ENCODE measurements at regions of chr21 and their contacts with region 1.

Region 1: DNA sequence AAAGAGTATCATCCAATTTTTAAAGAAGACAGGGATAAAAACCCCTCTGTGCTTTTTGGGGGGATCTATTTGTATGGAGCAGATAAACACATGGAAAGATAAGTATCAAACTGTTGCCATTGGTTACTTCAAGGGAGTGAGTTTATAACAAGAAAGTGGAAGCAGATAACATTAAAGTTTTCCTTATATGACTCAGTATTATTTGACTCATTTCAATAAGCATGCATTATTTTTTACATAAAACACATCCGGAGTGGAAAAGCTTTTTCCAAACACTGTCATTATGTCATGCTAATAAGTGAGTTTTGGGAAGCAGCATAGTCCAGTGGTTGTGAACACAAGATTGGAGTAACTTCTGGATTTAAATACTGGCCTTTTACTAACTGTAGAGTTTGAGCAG is 452.2 kb downstream of the LTN1 start:
- DNase-seq: no peak
- ATAC-seq: no peak

Region 2: DNA sequence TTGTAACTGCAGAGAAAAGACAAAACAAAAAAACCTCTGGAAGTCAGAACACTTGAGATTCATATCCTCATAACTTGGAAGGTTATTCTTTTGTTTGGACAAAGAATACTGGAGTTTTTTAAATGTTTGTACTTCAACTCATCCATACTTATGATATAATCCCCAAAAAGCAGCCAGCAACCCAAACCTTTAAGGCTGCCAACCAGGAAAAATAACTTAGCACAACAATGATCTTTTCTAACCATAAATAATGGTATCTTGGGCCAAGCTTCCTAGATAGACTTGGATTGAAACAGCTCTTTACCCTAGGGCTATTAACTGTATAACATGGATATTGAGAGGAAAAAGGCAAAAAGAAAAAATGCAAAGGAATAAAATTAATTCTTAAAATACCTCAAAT is 117.1 kb after region 1 on chr21:
- intact Hi-C with region 1: loop called (anchors 10 kb)
- DNase-seq: no peak
- ATAC-seq: no peak

Region 3: GRCh38 chr21:29155118-29155932 is 614.8 kb after region 1 on chr21:
- intact Hi-C with region 1: no loop called
- DNase-seq: peak; percentile 73
- ATAC-seq: peak; percentile 96